Adrenal gland (tissue), 19 donors: ENCODE measurements at regions of chr10 and their contacts with region 1.

Region 1: GRCh38 chr10:12264204-12264940 is 68.4 kb downstream of the CDC123 start:
- DNase-seq: peak; percentile 57 to 85 (median 74)
- H3K4me3 ChIP-seq: peak overlapping the region in 1 of 4 donors; percentile 62
- H3K27ac ChIP-seq: peak overlapping the region in 1 of 5 donors; percentile 9
- H3K4me1 ChIP-seq: peaks cover 0 to 15% of the 10 kb centered on the region in 2 donors
- H3K27me3 ChIP-seq: no peaks in the 10 kb centered on the region
- CTCF ChIP-seq: peak; percentile 52 to 84 (median 72)
- POLR2A ChIP-seq: no peak

Region 2: GRCh38 chr10:12332572-12333379 is 68.4 kb after region 1 on chr10:
- intact Hi-C with region 1: no loop called
- DNase-seq: peak in 6 of 7 donors; percentile 31 to 64 (median 42)
- H3K4me3 ChIP-seq: no peak overlapping the region
- H3K27ac ChIP-seq: peak overlapping the region in 4 of 5 donors; percentile 52 to 82 (median 62)
- H3K4me1 ChIP-seq: peaks cover 4 to 22% of the 10 kb centered on the region in 2 donors
- H3K27me3 ChIP-seq: no peaks in the 10 kb centered on the region
- CTCF ChIP-seq: no peak
- POLR2A ChIP-seq: no peak

Region 3: GRCh38 chr10:12360461-12360860 is 96.1 kb after region 1 on chr10:
- intact Hi-C with region 1: no loop called
- DNase-seq: no peak
- H3K4me3 ChIP-seq: no peak overlapping the region
- H3K27ac ChIP-seq: no peak overlapping the region
- H3K4me1 ChIP-seq: no peaks in the 10 kb centered on the region
- H3K27me3 ChIP-seq: no peaks in the 10 kb centered on the region
- CTCF ChIP-seq: no peak
- POLR2A ChIP-seq: no peak

Region 4: DNA sequence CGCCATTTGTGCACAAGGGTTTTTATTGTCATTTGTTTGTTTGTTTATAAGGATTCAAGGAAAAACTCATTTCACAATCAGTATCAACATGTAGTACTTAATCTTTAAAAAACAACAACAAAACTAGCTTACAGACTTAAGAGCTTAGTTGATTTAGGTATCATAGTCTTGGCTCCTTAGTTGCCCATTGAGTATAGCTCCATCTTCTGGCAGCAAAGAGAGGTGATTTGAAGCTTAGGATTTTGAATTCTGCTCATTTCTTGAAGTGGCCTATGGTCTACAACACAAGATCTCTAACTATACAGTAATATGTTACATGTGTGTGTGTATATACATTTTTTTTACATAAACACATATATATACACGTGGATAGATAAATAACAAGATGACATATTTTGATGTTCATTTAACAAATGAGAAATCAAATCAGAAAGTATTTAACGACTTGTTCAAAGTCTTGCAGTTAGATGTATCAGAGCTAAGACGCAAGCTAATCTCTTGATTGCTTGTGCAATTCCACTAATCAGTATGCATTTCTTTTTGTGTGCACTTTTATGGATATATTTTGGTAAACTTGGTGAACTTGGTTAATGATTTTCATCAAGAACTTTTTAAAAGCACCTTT is 392.3 kb after region 1 on chr10:
- intact Hi-C with region 1: loop called (anchors 5 kb)
- DNase-seq: no peak
- H3K4me3 ChIP-seq: no peak overlapping the region
- H3K27ac ChIP-seq: no peak overlapping the region
- H3K4me1 ChIP-seq: no peaks in the 10 kb centered on the region
- H3K27me3 ChIP-seq: no peaks in the 10 kb centered on the region
- CTCF ChIP-seq: peak; percentile 61 to 74 (median 72)
- POLR2A ChIP-seq: no peak

Region 5: DNA sequence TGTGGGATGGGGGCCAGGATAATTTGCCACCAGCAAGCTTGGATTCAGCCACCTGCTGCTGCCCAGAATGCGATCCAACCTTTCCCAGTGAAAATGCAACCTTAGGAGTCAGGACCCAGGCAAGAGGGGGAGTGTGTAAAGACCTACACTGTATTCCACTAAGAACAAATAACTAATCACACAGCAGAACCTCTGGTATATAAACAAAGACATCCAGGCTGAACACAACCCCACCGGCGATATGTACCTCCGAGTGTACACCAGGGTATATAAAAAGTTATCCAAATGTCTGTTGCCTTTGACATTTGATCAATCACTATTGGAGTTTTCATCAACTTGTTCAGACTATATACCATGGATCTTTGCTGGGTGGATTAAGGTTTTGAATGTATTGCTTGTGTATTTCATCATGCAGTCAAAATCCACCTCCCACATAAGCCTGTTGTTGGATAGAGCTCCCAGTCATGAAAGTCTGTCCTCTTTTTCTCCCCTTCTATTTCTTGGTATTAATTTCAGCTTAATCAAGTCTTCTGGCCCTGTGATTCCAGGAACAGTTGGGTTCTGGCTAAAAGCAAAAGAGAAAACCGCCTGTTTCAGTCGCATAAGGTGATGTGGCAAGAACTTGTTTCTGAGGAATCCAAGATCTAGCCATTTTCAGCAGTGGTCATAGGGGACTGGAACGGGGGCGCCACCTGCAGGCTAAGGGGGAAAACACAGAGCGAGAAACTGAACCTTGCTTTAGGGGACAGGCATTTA is 446.4 kb after region 1 on chr10:
- intact Hi-C with region 1: loop called (anchors 5 to 10 kb)
- DNase-seq: peak; percentile 66 to 89 (median 77)
- H3K4me3 ChIP-seq: no peak overlapping the region
- H3K27ac ChIP-seq: no peak overlapping the region
- H3K4me1 ChIP-seq: peaks cover 0 to 18% of the 10 kb centered on the region in 2 donors
- H3K27me3 ChIP-seq: no peaks in the 10 kb centered on the region
- CTCF ChIP-seq: peak; percentile 86 to 91 (median 90)
- POLR2A ChIP-seq: no peak